AG04449 (cell line): ENCODE measurements at regions of chr5 and their contacts with region 1.

Region 1: GRCh38 chr5:141618804-141619554 is at the start of gene DIAPH1:
- DNase-seq: peak; percentile 46
- H3K4me3 ChIP-seq: peak within 1 kb of the TSS; percentile 74
- CTCF ChIP-seq: peak; percentile 99

Region 2: GRCh38 chr5:141590127-141590526 is 28.9 kb before region 1 on chr5:
- CTCF ChIA-PET with region 1: interaction called, 413 read pairs
- POLR2A ChIA-PET with region 1: interaction called, 15 read pairs
- DNase-seq: no peak
- H3K4me3 ChIP-seq: no peak overlapping the region
- CTCF ChIP-seq: no peak

Region 3: GRCh38 chr5:141605523-141606277 is 13.3 kb before region 1 on chr5:
- CTCF ChIA-PET with region 1: interaction called, 259 read pairs
- POLR2A ChIA-PET with region 1: interaction called, 4 read pairs
- DNase-seq: no peak
- H3K4me3 ChIP-seq: no peak overlapping the region
- CTCF ChIP-seq: no peak

Region 4: DNA sequence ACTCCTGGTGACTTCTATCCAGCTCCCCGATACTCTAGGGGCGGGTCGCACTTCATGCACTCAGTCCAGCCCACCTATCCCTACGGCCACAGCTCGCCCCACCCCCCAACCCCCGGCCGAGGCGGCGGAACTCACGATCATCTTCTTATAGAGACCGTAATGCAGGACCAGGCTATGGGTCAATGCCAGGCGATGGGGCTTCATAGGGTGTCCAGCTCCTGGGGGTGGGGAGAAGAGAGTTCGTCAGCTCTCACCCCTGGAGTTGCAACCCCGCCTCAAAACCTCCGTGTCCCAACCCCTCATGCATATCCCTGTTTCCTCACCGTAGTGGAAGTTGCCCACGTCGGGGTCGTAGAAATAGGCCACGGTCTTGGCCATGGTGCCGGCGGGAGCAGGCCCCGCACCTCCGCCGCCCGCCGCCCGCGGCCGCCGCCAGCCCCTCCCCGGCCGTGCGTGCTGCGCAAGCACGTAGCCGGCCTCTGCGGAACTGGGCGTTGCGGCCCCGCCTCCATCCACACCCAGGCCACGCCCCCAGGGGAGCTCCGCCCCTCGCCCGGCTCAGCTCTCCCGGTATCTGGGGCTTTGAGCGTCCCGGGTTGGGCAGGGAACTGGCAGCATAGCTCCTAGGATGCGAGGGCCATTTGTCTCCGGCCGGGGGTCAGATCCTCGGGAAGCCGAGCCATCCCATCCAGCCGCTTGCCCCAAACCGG is 17.6 kb after region 1 on chr5 and contains the starts of genes HDAC3 and RELL2:
- CTCF ChIA-PET with region 1: interaction called, 314 read pairs
- POLR2A ChIA-PET with region 1: interaction called, 13 read pairs
- DNase-seq: no peak
- H3K4me3 ChIP-seq: peak within 1 kb of the TSS; percentile 99
- CTCF ChIP-seq: no peak

Region 5: GRCh38 chr5:141641634-141642267 is 22.8 kb after region 1 on chr5:
- CTCF ChIA-PET with region 1: interaction called, 314 read pairs
- POLR2A ChIA-PET with region 1: interaction called, 13 read pairs
- DNase-seq: no peak
- H3K4me3 ChIP-seq: no peak overlapping the region
- CTCF ChIP-seq: peak; percentile 40

Region 6: GRCh38 chr5:141650851-141651727 is 32.1 kb after region 1 on chr5 and contains the start of gene FCHSD1:
- CTCF ChIA-PET with region 1: interaction called, 15 read pairs
- POLR2A ChIA-PET with region 1: no interaction called
- DNase-seq: no peak
- H3K4me3 ChIP-seq: peak within 1 kb of the TSS; percentile 81
- CTCF ChIP-seq: no peak